PC-9 (cell line): ENCODE measurements at regions of chr20 and their contacts with region 1.

Region 1: GRCh38 chr20:3173610-3174441 is 477 bp upstream of the LZTS3 start:
- DNase-seq: peak; percentile 46 to 88
- H3K4me3 ChIP-seq: peak overlapping the region; percentile 99
- H3K27ac ChIP-seq: no peak overlapping the region
- H3K4me1 ChIP-seq: peaks cover 13% of the 10 kb centered on the region
- H3K27me3 ChIP-seq: no peaks in the 10 kb centered on the region
- CTCF ChIP-seq: no peak

Region 2: GRCh38 chr20:2242678-2243077 is 931.1 kb before region 1 on chr20:
- CTCF ChIA-PET with region 1: interaction called, 18 read pairs
- POLR2A ChIA-PET with region 1: no interaction called
- intact Hi-C with region 1: no loop called
- DNase-seq: no peak
- H3K4me3 ChIP-seq: no peak overlapping the region
- H3K27ac ChIP-seq: no peak overlapping the region
- H3K4me1 ChIP-seq: no peaks in the 10 kb centered on the region
- H3K27me3 ChIP-seq: peaks cover 15% of the 10 kb centered on the region; the same call in 1 of the 2 replicates
- CTCF ChIP-seq: no peak